Colonic mucosa (tissue), 4 donors: ENCODE measurements at regions of chr7 and their contacts with region 1.

Region 1: DNA sequence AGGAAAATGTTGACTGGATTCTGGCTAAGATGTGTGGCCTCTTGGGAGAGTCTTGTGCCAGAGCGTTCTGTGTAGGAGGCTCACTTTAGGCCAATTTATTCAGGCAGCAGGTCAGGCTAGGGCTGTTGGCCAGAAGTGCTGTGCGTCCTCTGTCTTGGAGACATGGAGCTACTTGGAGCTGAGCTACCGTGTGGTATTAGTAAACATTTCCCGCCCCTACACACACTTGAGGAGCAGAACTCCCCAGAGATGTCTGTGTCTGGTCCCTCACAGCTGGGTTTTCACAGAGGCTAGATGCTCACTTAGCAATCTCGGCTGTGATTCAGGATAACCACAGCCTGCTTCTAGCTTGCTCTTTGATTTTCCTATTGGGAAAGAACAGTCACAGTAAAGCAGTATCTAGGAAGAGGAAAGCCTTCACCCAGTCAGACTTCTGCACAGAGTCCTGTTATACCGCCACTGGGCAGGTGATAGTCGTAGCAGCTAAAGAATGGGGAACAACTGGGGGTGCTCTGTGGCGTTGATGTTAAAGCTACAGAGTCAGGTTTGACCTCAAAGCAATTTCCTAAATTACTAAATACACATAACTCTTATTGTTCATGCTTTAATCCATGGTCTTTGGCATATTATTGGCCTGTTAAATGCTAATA is 86.7 kb downstream of the MDFIC start:
- DNase-seq: peak; percentile 32
- H3K4me3 ChIP-seq: no peak overlapping the region
- H3K27ac ChIP-seq: peak overlapping the region; percentile 47
- H3K4me1 ChIP-seq: peaks cover 5% of the 10 kb centered on the region
- H3K27me3 ChIP-seq: no peaks in the 10 kb centered on the region
- CTCF ChIP-seq: no peak

Region 2: GRCh38 chr7:114255404-114255841 is 753.2 kb before region 1 on chr7:
- intact Hi-C with region 1: no loop called
- DNase-seq: peak; percentile 73
- H3K4me3 ChIP-seq: no peak overlapping the region
- H3K27ac ChIP-seq: peak overlapping the region; percentile 52
- H3K4me1 ChIP-seq: no peaks in the 10 kb centered on the region
- H3K27me3 ChIP-seq: no peaks in the 10 kb centered on the region
- CTCF ChIP-seq: no peak

Region 3: DNA sequence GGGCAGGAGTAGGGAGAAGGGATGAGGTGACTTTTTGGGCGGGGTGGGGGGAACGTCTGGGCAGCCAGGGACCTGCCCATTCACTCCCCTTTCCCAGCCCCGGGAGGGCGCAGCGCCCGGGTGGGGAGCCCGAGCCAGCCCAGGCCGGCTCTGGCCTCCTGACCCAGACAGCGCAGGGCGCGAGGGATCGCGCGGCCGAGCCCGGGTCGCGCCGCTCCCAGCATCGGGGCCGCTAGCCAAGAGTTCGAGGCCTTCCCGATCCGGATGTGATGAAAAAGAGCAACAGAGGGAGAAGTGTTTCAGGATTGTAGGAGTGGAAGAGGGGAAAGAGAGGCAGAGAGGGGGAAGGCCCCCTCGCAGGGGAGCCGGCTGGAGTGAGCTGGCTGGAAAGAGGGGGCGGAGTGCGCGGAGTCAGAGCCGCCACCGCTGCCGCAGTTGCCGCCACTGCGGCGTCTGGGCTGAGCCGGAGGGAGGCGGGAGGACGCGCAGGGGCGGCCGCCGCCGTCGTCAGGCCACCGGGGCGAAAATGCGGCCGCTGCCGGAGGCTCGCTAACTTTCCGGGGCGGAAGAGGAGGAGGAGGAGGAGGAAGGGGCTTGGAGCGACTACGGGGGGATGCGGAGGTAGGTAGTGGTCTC is 86.5 kb before region 1 on chr7 and contains the start of gene MDFIC:
- intact Hi-C with region 1: loop called (anchors 5 kb)
- DNase-seq: peak; percentile 57
- H3K4me3 ChIP-seq: peak within 1 kb of the TSS; percentile 69
- H3K27ac ChIP-seq: peak within 1 kb of the TSS; percentile 84
- H3K4me1 ChIP-seq: no peaks in the 10 kb centered on the region
- H3K27me3 ChIP-seq: no peaks in the 10 kb centered on the region
- CTCF ChIP-seq: no peak
- total RNA-seq, gene MDFIC: 8.5 to 9.1 TPM